Activated CD4-positive, alpha-beta memory T cell treated with anti-CD3 and anti-CD28 coated beads for 36 hours (primary cell): ENCODE measurements at regions of chr2 and their contacts with region 1.

Region 1: GRCh38 chr2:153543639-153544071 is 65.1 kb upstream of the RPRM start:
- DNase-seq: peak; percentile 13
- H3K4me3 Mint-ChIP-seq: no peak overlapping the region
- H3K27ac Mint-ChIP-seq: no peak overlapping the region
- H3K4me1 Mint-ChIP-seq: peaks cover 6% of the 10 kb centered on the region
- H3K27me3 Mint-ChIP-seq: no peaks in the 10 kb centered on the region

Region 2: DNA sequence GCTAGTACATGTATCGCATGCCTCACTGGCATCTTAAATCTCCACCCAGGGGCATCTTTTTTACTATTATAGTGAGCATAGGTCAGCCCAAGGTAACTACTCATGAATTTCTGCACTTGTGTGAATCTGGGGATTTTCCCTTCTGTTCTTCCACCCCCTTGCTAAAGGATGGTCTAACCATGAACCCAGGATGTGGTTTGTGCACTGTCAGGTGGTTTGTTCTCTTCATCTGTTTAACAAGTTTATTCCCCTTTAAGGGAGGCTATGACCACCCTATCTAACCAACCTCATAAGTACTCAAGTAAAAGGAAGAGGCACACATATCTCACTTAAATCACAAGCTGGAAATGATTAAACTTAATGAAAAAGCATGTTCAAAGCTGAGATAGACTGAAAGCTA is 308.1 kb before region 1 on chr2:
- CTCF ChIA-PET with region 1: no interaction called
- POLR2A ChIA-PET with region 1: no interaction called
- intact Hi-C with region 1: loop called (anchors 1 kb)
- DNase-seq: peak; percentile 54
- H3K4me3 Mint-ChIP-seq: no peak overlapping the region
- H3K27ac Mint-ChIP-seq: peak overlapping the region; percentile 6
- H3K4me1 Mint-ChIP-seq: peaks cover 14% of the 10 kb centered on the region
- H3K27me3 Mint-ChIP-seq: no peaks in the 10 kb centered on the region

Region 3: DNA sequence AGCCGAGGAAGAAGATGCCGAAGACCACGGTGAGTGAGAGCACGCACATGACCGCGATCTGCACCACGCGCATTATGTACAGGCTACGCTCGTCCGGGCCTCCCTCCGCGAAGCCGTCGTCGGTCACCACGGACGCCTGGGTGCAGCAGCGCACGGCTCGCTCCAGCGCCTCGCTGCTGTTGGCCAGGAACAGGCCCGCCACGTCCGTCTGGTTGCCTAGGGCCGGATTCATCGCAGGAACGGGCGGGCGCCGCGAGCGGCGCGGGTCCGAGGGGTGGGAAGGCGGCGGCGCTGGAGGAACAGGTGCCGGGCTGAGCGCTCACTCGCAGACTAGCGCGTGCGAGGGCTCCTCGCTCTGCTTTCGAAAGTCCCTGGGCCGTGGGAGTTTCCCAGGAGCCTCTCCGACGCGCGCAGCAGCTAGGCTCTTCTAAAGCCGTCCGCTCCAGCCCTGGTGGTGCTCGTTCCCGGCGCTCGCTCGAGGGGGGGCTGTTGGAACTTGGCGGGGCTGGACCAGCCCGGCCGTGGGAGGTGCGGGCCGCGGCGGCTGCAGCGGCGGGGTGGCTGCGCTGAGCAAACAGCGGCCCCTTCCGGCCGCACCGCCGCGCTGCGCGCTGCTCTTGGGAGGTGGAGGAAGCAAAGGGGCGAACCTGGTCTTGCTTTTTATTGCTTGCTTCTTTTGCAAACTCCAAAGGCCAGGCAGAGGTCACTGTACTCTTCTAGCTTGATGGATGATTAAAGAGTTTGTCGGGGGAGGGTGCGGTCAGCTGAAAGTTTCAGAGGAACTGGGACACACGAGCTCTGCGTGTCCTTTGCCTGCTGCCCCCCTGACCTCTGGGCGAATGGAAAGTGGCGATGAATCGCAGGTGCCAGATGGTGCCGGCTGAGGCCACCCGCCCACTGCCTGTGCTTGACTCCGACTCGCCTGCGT is 65.1 kb before region 1 on chr2 and contains the start of gene RPRM:
- CTCF ChIA-PET with region 1: no interaction called
- POLR2A ChIA-PET with region 1: no interaction called
- intact Hi-C with region 1: loop called (anchors 1 kb)
- DNase-seq: peak; percentile 66
- H3K4me3 Mint-ChIP-seq: peak within 1 kb of the TSS; percentile 6
- H3K27ac Mint-ChIP-seq: no peak within 1 kb of the TSS
- H3K4me1 Mint-ChIP-seq: peaks cover 17% of the 10 kb centered on the region
- H3K27me3 Mint-ChIP-seq: peaks cover 58% of the 10 kb centered on the region
- total RNA-seq, gene RPRM: not detected

Region 4: DNA sequence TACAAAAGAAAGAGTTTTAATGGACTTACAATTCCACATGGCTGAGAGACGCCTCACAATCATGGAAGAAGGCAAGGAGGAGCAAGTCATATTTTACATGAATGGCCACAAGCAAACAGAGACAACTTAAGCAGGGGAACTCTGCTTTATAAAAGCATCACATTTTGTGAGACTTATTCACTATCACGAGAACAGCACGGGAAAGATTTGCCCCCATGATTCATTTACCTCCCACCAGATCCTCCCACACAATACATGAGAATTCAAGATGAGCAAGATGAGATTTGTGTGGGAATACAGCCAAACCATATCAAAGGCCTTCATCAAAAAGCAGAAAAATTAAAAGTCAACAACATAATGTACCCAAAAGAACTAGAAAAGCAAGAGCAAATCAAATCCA is 45.9 kb after region 1 on chr2:
- CTCF ChIA-PET with region 1: no interaction called
- POLR2A ChIA-PET with region 1: no interaction called
- intact Hi-C with region 1: no loop called
- DNase-seq: no peak
- H3K4me3 Mint-ChIP-seq: no peak overlapping the region
- H3K27ac Mint-ChIP-seq: no peak overlapping the region
- H3K4me1 Mint-ChIP-seq: no peaks in the 10 kb centered on the region
- H3K27me3 Mint-ChIP-seq: no peaks in the 10 kb centered on the region